ENCODE measurements at regions of chr2 and their contacts with region 1.

Region 1: GRCh38 chr2:218301176-218301819 is 9.0 kb upstream of the TMBIM1 start:
- DNase-seq: peak; percentile 76
- CTCF ChIP-seq: peak; percentile 91

Region 2: GRCh38 chr2:218129458-218130135 is 171.7 kb before region 1 on chr2:
- CTCF ChIA-PET with region 1: no interaction called
- POLR2A ChIA-PET with region 1: no interaction called
- DNase-seq: no peak
- CTCF ChIP-seq: no peak

Region 3: DNA sequence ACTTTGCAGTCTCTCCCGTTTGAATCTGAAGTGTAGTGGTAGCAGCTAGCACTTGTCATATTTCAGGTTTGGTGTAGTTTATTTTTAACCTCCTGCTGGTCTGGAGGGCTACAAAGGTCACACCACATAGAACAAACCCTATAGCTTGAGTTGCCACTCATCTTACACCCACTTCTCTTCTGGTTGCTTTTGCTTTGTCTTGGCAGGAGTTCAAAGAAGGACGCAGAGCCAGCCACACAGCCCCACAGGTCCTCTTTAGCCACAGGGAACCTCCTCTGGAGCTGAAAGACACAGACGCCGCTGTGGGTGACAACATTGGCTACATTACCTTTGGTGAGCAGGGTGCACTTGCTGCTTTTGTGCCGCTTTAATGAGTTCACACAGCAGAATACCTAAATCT is 56.1 kb before region 1 on chr2:
- CTCF ChIA-PET with region 1: no interaction called
- POLR2A ChIA-PET with region 1: no interaction called
- DNase-seq: no peak
- CTCF ChIP-seq: no peak

Region 4: DNA sequence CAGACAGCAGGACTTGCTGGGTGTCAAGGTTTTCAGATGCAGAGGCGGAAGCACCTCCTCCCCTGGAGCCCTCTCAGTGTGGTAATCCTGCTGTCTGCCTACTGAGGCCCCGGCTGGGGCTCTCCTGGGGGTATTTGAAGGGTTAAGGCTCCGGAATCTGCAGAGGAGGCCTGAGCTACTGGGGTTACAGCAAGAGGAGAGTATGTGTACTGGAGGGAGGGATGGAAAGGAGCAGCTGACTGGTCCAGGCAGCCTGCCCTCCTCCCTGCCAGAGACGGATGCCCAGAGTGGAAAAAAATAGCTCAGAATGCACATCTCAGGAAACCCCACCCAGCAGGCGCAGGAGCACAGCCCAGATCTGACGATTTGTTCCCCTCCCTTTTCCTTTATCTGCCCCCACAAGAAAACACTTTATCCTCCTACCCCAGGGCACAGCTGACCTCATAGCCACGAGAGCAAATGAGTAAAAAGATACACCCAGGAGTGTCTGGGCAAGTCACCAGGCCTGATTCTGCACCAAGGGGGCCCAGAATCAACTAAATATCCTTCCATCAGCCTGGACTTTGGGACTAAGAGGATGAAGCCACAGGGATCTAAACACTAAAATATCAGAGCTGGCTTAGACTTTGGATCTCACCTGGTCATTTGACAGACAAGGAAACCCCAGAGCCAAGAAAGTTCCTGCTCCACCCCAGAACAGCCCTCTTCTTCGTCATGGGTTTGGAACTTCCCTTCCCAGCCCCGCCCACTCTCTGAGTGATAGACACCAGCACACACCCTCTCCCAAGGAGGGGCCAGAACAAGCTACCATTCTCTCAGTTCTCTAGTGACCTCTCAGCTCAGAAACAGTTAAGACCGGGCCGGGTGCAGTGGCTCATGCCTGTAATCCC is 14.5 kb before region 1 on chr2:
- CTCF ChIA-PET with region 1: interaction called, 23 read pairs
- POLR2A ChIA-PET with region 1: no interaction called
- DNase-seq: peak; percentile 86
- CTCF ChIP-seq: no peak

Region 5: DNA sequence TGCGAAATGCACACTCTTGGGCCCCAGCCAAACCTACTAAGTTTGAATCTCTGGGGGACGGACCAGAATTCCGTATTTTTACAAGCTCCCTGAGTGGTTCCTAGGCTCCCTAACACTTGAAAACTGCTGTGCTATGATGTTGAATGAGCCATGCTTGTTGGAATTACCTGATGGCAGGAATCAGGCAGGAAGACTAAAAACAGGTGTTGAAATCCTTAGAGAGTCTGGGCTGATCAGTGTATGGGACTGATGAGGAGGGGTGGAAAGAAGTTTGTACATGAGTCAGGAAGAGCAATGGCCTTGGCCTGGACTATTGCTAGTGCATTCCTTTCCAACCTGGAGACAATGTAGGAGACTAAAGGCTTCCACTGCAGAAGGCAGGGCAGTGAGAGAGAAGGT is 15.9 kb after region 1 on chr2:
- CTCF ChIA-PET with region 1: interaction called, 23 read pairs
- POLR2A ChIA-PET with region 1: no interaction called
- DNase-seq: no peak
- CTCF ChIP-seq: no peak

Region 6: DNA sequence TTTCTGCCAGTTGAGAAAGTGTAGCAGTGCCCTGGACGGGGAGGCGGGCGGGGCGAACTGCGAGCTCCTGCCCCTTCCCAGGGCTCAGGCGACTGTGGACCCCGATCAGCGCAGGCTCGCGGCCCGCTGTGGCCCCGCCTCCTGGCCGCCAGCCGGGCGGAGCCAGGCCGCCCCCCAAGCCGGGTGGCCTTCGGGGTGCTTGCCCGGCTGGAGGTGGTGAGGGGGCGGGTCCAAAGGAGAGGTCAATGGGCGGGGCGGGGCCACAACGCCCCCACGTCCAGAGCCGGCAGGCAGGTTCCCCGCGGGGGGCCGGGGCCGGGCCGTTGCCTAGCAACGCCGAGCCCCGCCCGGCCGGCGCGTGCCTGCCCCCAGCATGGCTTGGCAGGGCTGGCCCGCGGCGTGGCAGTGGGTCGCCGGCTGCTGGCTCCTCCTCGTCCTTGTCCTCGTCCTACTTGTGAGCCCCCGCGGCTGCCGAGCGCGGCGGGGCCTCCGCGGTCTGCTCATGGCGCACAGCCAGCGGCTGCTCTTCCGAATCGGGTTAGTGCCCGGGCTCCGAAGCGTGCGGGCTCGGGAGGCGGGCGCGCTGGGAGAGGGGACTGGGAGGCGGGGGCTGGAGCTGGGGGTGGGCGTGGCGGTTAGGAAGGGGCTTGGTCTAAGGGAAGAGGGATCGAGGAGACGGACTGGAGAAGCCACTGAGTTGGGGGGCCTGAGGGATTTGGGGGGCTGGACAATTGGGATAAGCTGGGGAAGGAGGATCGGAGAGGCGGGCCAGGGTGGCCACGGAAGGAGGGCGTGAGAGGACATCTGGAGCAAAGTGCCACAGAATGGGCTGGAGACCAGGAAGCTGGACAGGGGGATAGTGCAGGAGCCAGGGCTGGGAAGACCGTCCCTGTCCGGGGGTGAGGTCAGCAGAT is 21.9 kb after region 1 on chr2:
- CTCF ChIA-PET with region 1: interaction called, 23 read pairs
- POLR2A ChIA-PET with region 1: no interaction called
- DNase-seq: peak; percentile 93
- CTCF ChIP-seq: no peak

Region 7: DNA sequence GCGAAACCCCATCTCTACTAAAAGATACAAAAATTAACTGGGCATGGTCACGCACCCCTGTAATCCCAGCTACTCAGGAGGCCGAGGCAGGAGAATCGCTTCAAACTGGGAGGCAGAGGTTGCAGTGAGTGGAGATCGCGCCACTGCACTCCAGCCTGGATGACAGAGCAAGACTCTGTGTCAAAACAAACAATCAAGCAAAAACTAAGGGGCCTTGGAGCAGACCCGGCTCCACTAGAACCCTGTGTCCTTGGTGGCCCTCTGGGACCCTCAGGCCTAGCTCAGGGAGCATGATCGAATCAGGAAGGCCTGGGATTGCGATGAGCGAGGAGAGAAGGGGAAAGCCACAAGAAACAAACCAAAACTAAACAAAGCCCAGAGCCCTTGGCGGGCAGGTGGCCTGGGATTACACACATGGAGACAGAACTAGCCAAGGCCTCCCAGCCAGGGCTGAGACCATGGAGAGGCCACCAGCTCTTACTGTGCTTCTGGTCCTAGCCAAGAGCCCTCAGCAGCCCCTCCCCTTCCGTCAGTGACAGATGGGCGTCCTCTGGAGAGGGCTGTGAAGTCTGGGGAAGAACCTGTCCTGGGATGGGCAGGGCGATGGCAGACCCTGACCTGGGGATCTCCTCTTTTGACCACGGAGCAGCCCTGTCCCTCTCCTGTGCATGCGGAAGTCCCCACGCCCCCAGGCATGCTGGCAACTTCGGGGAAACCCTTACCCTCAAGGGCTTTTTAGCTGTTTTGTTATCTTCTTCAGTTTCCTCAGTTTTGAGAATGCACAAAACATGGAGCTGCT is 27.9 kb after region 1 on chr2:
- CTCF ChIA-PET with region 1: interaction called, 23 read pairs
- POLR2A ChIA-PET with region 1: no interaction called
- DNase-seq: peak; percentile 75
- CTCF ChIP-seq: no peak

Region 8: DNA sequence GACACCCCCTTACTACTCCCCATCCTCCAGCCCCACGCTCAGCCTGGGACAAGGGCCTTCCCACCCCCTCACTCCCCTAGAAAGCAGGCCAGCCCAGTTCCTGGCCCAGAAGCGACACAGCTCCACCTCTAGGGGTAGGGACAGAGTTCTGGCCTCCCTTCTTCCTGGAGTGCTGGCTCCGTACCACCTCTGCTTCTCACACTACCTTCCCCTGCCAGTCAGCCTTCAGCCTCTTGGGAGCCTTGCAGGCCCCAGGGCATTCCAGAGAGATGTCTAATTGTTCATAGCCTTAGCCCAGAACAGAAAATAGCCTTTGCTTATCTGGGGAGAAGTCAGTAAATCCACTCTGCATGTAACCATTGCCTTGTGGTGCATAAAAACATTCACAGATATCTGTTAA is 42.3 kb after region 1 on chr2:
- CTCF ChIA-PET with region 1: interaction called, 13 read pairs
- POLR2A ChIA-PET with region 1: no interaction called
- DNase-seq: no peak
- CTCF ChIP-seq: no peak

Region 9: GRCh38 chr2:218395797-218396687 is 94.7 kb after region 1 on chr2:
- CTCF ChIA-PET with region 1: interaction called, 25 read pairs
- POLR2A ChIA-PET with region 1: no interaction called
- DNase-seq: peak; percentile 93
- CTCF ChIP-seq: peak; percentile 77

Measured in GM10248 (cell line).